Colonic mucosa (tissue), 4 donors: ENCODE measurements at regions of chr6 and their contacts with region 1.

Region 1: GRCh38 chr6:47631269-47631772 is 67.1 kb upstream of the ADGRF4 start:
- DNase-seq: peak; percentile 36
- H3K4me3 ChIP-seq: no peak overlapping the region
- H3K27ac ChIP-seq: peak overlapping the region; percentile 21
- H3K4me1 ChIP-seq: no peaks in the 10 kb centered on the region
- H3K27me3 ChIP-seq: no peaks in the 10 kb centered on the region
- CTCF ChIP-seq: peak; percentile 47

Region 2: GRCh38 chr6:47352194-47352920 is 279.0 kb before region 1 on chr6:
- intact Hi-C with region 1: no loop called
- DNase-seq: no peak
- H3K4me3 ChIP-seq: no peak overlapping the region
- H3K27ac ChIP-seq: no peak overlapping the region
- H3K4me1 ChIP-seq: no peaks in the 10 kb centered on the region
- H3K27me3 ChIP-seq: no peaks in the 10 kb centered on the region
- CTCF ChIP-seq: no peak

Region 3: GRCh38 chr6:47733879-47734558 is 102.7 kb after region 1 on chr6:
- intact Hi-C with region 1: loop called (anchors 5 kb)
- DNase-seq: peak; percentile 27
- H3K4me3 ChIP-seq: no peak overlapping the region
- H3K27ac ChIP-seq: no peak overlapping the region
- H3K4me1 ChIP-seq: no peaks in the 10 kb centered on the region
- H3K27me3 ChIP-seq: no peaks in the 10 kb centered on the region
- CTCF ChIP-seq: no peak

Region 4: DNA sequence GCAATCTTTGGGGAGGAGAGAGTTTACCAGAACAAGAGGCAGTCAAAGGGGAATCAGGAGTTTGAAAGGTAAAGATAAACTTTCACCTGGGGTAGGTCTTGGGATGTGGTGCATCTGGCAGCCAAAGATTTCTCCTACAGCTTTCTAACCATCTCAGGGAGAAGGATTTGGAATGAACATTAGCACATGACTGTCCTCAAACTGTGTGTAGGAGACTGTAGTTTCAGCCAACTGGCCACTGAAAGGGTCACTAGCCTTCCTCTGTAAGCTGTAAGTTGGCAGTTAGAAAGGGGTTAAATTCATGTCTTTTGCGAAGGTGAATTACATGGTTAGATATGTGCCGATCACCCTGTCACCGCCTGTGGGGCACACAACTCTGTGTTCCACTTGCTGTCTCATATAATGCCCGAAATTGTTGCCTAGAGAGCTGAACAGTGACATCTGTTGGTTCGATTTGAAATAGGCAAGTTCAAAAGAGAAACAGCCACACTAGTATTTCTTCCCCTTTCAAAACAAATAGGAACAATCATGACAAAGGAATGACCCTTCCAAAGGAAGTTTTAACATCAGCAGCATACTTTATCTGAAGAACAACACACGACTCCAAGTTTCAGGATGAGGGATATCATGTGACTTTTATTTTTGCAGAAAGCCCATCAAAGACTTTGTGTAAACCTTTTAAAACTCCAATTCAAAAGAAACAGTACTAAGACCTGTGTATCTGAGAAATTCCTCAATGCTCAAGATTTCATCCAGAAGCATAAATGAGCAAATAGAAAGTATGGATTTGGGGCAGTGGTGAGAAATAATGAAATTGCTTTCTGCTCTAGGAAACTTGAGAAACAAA is 149.4 kb after region 1 on chr6:
- intact Hi-C with region 1: loop called (anchors 2 kb)
- DNase-seq: peak; percentile 43
- H3K4me3 ChIP-seq: no peak overlapping the region
- H3K27ac ChIP-seq: no peak overlapping the region
- H3K4me1 ChIP-seq: no peaks in the 10 kb centered on the region
- H3K27me3 ChIP-seq: no peaks in the 10 kb centered on the region
- CTCF ChIP-seq: peak; percentile 48